ENCODE measurements at regions of chr13 and their contacts with region 1.

Region 1: DNA sequence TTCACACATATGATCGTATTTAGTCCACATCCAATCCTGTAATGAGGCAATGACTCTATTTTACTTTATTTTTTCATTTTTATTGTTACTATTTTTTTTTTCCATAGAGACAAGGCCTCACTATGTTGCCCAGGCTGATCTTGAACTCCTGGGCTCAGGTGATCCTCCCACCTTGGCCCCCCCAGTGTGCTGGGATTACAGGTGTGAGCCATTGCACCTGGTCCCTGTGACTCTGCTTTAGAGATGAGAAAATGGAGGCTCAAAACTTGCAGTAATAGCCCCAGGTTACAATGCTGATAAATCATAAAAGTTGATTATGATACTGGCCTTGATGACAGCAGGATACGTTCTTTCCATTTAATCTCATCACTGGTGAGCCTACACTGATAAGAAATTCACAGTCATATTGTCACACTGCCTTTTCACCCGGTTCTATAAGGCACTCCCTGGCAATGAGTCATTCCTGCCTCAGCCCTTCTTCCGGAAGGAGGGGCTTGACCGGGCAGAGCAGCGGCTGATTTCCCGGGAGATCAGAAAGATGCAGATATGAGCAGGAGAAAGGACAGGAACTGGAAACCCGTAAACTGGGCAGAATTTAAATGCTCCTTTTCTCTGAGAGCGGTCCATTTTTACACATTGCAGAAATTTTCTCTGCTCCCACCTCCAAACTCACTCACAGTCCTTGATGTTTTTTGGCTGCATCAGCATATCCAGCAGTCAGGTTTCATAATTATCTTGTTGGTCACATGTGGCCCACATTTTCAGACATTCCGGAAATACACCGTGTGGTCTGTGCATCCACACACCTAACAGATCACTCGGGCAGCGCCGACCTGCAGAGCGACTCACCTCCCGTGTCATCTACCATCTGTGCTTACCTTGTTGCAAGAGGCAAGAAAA is 616.4 kb downstream of the EFNB2 start:
- DNase-seq: peak; percentile 90
- ATAC-seq: peak; percentile 91
- H3K4me3 ChIP-seq: peak overlapping the region; percentile 54
- H3K27ac ChIP-seq: peak overlapping the region; percentile 99
- H3K4me1 ChIP-seq: peaks cover 29% of the 10 kb centered on the region
- H3K27me3 ChIP-seq: no peaks in the 10 kb centered on the region
- CTCF ChIP-seq: no peak

Region 2: GRCh38 chr13:105463011-105463501 is 456.0 kb before region 1 on chr13:
- CTCF ChIA-PET with region 1: no interaction called
- POLR2A ChIA-PET with region 1: no interaction called
- intact Hi-C with region 1: loop called (anchors 5 kb)
- DNase-seq: peak; percentile 32
- ATAC-seq: peak; percentile 48
- H3K4me3 ChIP-seq: no peak overlapping the region
- H3K27ac ChIP-seq: no peak overlapping the region
- H3K4me1 ChIP-seq: no peaks in the 10 kb centered on the region; the same call in 1 of the 2 replicates
- H3K27me3 ChIP-seq: no peaks in the 10 kb centered on the region
- CTCF ChIP-seq: no peak

Region 3: DNA sequence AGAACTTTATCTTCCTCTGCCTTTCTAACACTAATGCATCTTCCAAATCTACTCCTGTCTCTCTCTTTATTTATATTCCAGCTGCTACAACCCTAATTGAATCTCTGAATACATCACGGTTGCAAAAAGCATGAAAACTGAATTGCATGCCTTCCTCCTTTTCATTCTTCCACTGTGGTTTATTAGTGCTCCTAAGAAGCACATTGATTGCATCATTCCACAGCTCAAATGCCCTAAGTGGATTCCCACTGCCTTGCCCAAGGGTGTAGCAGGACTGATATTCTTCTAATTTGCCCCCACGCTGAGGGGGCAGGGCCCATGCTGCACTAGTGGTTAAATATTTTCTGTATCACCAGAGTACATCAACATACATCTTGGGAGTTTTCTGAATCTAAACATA is 24.4 kb before region 1 on chr13:
- CTCF ChIA-PET with region 1: no interaction called
- POLR2A ChIA-PET with region 1: no interaction called
- intact Hi-C with region 1: no loop called
- DNase-seq: no peak
- ATAC-seq: no peak
- H3K4me3 ChIP-seq: no peak overlapping the region
- H3K27ac ChIP-seq: no peak overlapping the region
- H3K4me1 ChIP-seq: no peaks in the 10 kb centered on the region
- H3K27me3 ChIP-seq: no peaks in the 10 kb centered on the region
- CTCF ChIP-seq: no peak

Region 4: GRCh38 chr13:105936816-105937215 is 17.7 kb after region 1 on chr13:
- CTCF ChIA-PET with region 1: no interaction called
- POLR2A ChIA-PET with region 1: no interaction called
- intact Hi-C with region 1: no loop called
- DNase-seq: no peak
- ATAC-seq: no peak
- H3K4me3 ChIP-seq: no peak overlapping the region
- H3K27ac ChIP-seq: no peak overlapping the region
- H3K4me1 ChIP-seq: 0 out of 2 replicates have a peak, but pooled peaks cover 4% of the 10 kb centered on the region
- H3K27me3 ChIP-seq: no peaks in the 10 kb centered on the region
- CTCF ChIP-seq: no peak

Region 5: GRCh38 chr13:106033659-106034058 is 114.6 kb after region 1 on chr13:
- CTCF ChIA-PET with region 1: no interaction called
- POLR2A ChIA-PET with region 1: no interaction called
- intact Hi-C with region 1: loop called (anchors 10 kb)
- DNase-seq: peak; percentile 49
- ATAC-seq: peak; percentile 24; the same call in 1 of the 2 replicates
- H3K4me3 ChIP-seq: no peak overlapping the region
- H3K27ac ChIP-seq: no peak overlapping the region
- H3K4me1 ChIP-seq: peaks cover 3% of the 10 kb centered on the region; the same call in 1 of the 2 replicates
- H3K27me3 ChIP-seq: no peaks in the 10 kb centered on the region
- CTCF ChIP-seq: peak; percentile 38

Region 6: GRCh38 chr13:106096661-106097092 is 177.6 kb after region 1 on chr13:
- CTCF ChIA-PET with region 1: no interaction called
- POLR2A ChIA-PET with region 1: no interaction called
- intact Hi-C with region 1: loop called (anchors 2 kb)
- DNase-seq: peak; percentile 90
- ATAC-seq: peak; percentile 72
- H3K4me3 ChIP-seq: peak overlapping the region; percentile 34; the same call in 1 of the 2 replicates
- H3K27ac ChIP-seq: peak overlapping the region; percentile 95
- H3K4me1 ChIP-seq: peaks cover 65% of the 10 kb centered on the region
- H3K27me3 ChIP-seq: no peaks in the 10 kb centered on the region
- CTCF ChIP-seq: no peak

Measured in PC-3 (cell line).